Dendritic cell treated with granulocyte-macrophage colony-stimulating factor and Interleukin-4, amounts not matched to agents 40 ng/mL and 50 ng/mL, for 4 days (primary cell): ENCODE measurements at regions of chrX and their contacts with region 1.

Region 1: DNA sequence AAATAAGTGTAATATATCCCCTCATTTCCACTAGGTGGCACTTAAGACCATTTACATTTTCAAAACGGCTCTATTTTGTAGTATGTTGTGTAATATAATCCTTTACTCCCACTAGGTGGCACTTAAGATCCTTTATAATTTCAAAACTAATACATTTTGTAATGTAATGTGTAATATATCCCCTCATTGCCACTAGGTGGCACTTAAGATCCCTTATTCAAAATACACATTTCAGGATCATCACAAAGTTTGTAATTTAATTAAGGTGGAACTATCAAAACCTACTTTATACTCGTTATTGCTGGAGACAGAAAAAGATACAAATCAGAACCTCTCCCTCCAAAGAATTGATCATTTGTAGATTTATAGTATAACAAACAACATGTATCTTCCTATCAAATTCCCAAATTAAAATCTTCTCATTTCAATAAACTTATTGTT is 132.5 kb downstream of the ARHGAP6 start:
- H3K4me3 Mint-ChIP-seq: no peak overlapping the region
- H3K27ac Mint-ChIP-seq: no peak overlapping the region
- H3K4me1 Mint-ChIP-seq: no peaks in the 10 kb centered on the region
- H3K27me3 Mint-ChIP-seq: peaks cover 2% of the 10 kb centered on the region

Region 2: DNA sequence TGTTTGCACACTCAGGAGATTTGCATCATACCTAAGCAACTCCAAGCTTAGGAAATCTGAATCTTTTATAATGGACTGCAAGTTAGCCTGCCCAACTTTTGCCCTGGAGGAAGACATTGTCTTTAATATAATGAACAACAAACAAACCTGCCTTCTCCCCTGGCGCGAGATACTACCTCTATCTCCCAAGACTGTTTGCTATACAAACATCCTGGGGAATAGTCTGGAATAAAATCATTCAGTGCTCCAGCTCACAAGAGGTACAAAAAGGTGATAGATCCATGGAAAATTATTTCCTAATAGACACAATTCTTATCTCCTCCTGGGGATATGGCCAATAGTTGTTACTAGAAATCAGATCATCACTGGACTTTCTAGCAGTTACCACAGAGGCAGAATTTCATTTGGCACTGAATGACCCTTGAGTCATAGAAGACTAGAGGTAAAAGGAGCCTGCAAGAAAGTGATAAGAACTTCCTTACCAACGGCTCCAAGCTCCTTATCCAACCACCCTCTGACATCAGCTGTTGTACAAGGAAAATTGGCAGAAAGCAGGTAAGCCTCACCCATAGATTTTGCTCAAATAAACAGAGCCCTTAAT is 951.0 kb before region 1 on chrX:
- intact Hi-C with region 1: no loop called
- H3K4me3 Mint-ChIP-seq: no peak overlapping the region
- H3K27ac Mint-ChIP-seq: no peak overlapping the region
- H3K4me1 Mint-ChIP-seq: no peaks in the 10 kb centered on the region
- H3K27me3 Mint-ChIP-seq: no peaks in the 10 kb centered on the region

Region 3: DNA sequence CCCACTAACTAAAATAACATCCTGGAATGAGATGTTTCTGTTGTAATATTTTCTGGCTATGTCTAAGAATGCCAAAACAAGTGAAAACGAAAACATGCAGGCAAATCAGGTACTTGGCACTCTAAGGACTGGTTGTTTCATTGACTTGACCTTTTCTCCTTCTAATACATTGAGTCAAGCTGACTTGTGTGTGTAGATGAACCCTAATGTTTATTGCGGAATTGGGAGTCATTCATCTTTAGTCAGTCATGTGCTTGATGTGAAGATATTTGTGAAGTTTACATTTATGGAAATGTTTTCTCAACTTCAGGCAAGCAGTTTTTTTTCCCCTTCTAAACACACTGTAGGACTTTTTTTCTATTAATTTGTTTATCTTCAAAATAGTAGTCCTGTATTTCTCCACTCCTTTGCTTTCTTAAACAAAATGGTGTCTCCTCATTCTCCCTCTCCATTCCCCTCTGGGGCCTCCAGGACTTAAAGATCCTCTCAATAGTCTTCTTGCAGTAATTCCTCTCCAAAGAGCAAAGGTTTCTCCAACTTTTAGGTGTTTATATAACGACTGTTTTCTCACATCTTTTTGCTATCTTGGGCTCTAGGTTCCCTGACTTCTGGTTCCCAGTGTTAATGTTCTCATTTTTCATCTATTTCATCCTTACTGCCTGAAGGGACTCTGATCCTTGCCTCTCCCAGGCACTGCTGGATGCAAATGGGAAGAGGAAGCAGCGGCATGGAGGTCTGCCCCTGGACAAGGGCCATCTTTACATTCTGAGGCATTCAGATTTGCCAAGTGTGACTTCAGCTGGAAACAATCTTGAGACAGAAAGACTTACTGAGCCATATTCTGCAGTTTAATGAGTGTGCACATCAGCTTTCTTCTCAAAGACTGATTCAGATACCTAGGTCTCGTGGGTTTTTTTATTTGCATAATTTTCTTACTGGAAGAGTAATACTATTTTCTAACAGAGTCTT is 33.9 kb before region 1 on chrX:
- intact Hi-C with region 1: no loop called
- H3K4me3 Mint-ChIP-seq: no peak overlapping the region
- H3K27ac Mint-ChIP-seq: no peak overlapping the region
- H3K4me1 Mint-ChIP-seq: no peaks in the 10 kb centered on the region
- H3K27me3 Mint-ChIP-seq: no peaks in the 10 kb centered on the region

Region 4: GRCh38 chrX:11770320-11770719 is 237.1 kb after region 1 on chrX:
- intact Hi-C with region 1: loop called (anchors 1 kb)
- H3K4me3 Mint-ChIP-seq: no peak overlapping the region
- H3K27ac Mint-ChIP-seq: no peak overlapping the region
- H3K4me1 Mint-ChIP-seq: peaks cover 29% of the 10 kb centered on the region
- H3K27me3 Mint-ChIP-seq: no peaks in the 10 kb centered on the region